ENCODE measurements at regions of chr7 and their contacts with region 1.

Region 1: GRCh38 chr7:158050978-158051651 is 536.5 kb downstream of the PTPRN2 start:
- DNase-seq: no peak
- ATAC-seq: no peak
- H3K4me3 ChIP-seq: no peak overlapping the region
- H3K27ac ChIP-seq: no peak overlapping the region
- H3K4me1 ChIP-seq: no peaks in the 10 kb centered on the region
- H3K27me3 ChIP-seq: peaks cover 9% of the 10 kb centered on the region
- CTCF ChIP-seq: no peak

Region 2: DNA sequence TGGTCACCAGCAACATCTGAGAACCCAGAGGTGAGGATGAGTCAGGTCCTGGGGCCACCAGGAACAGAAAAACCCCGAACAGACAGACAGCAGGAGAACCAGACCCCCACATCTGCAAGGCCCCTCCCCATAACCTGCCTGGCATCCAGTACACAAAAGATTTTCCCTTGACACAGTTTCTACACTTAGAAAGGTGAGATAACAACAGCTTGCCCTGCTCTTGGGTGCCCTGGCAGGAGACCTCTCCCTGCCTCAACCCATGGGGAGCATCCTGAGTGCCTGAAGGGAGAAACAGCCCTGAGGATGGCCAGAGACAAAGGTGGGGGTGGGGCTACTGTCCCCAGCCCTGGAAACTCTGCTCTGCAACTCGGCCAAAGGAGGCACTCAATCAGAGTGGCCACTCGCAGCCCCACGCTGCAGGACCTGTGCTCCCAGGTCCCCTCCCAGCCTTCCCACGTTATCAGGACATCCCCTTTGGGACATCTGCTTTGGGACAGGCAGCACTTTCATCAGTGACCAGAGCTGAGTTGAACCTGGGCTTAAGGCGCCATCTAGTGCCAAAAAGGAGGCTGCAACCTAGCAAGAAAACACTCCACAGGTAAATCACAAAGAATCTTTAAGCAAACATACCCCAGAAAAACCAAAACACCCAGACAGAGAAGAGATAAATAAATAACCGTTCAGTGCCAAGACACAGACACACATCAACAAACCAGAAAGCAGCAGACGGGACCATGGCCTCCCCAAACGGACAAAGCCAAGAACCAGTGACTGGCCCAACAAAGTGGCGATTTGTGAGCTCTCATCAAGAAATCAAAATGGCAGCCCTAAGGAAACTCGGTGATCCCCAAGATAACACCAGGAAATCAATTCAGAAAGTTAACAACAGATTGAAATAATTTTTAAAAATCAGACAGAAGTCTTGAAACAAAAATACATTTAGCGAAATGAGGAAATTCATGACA is 302.8 kb after region 1 on chr7:
- CTCF ChIA-PET with region 1: no interaction called
- POLR2A ChIA-PET with region 1: no interaction called
- intact Hi-C with region 1: loop called (anchors 10 kb)
- DNase-seq: peak; percentile 61
- ATAC-seq: peak; percentile 71
- H3K4me3 ChIP-seq: no peak overlapping the region
- H3K27ac ChIP-seq: no peak overlapping the region
- H3K4me1 ChIP-seq: no peaks in the 10 kb centered on the region
- H3K27me3 ChIP-seq: 0 out of 2 replicates have a peak, but pooled peaks cover 4% of the 10 kb centered on the region
- CTCF ChIP-seq: peak; percentile 82

Region 3: DNA sequence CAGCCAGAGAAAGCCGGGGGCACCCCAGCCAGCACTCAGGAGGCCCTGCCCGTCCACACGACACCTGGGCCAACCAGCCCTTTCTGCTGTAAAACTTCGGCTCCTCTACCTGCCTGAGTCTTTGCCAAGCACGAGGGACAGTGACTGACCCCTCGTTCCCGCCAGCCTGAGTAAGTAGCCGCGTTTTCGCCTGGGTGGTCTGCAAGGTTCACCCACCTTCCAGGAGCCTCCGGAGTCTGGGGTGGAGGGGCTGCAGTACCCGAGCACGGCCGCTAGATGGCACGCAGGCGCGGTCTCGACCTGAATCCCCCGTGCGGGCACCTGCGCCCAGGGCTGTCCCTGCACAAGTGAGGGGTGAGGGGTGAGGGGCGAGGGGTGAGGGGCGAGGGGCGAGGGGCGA is 343.8 kb after region 1 on chr7:
- CTCF ChIA-PET with region 1: no interaction called
- POLR2A ChIA-PET with region 1: no interaction called
- intact Hi-C with region 1: no loop called
- DNase-seq: peak; percentile 46
- ATAC-seq: peak; percentile 50
- H3K4me3 ChIP-seq: no peak overlapping the region
- H3K27ac ChIP-seq: no peak overlapping the region
- H3K4me1 ChIP-seq: peaks cover 15% of the 10 kb centered on the region
- H3K27me3 ChIP-seq: peaks cover 3% of the 10 kb centered on the region; the same call in 1 of the 2 replicates
- CTCF ChIP-seq: peak; percentile 62

Region 4: DNA sequence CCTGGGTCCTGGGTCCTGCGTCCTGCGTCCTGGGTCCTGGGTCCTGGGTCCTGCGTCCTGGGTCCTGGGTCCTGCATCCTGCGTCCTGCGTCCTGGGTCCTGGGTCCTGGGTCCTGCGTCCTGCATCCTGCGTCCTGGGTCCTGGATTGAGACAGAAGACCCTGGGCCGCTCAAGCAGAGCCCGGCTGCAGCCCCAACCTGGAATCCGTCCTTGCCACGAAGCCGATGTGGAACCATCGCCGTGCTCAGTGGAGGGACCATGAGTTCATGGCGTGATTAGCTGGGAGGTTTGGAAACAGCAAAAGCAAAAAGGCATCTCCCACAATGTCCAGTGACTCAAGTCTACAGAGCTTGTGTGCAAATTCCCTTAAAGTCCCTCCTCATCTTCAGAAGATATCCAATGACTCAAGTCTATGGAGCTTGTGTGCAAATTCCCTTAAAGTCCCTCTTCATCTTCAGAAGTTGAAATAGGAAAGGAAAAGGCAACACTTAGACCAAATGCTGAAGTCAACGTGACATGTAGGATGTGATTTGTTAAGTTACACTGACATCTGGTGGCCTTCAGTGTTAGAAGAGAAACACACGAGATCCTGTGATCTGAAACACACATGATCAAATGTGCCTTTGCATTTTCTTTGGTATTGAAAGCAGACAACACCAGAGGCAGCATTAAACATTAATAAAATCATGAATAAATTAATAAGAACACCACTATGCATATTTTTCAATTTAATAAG is 356.6 kb after region 1 on chr7:
- CTCF ChIA-PET with region 1: no interaction called
- POLR2A ChIA-PET with region 1: no interaction called
- intact Hi-C with region 1: loop called (anchors 2 kb)
- DNase-seq: peak; percentile 71
- ATAC-seq: peak; percentile 87
- H3K4me3 ChIP-seq: no peak overlapping the region
- H3K27ac ChIP-seq: no peak overlapping the region
- H3K4me1 ChIP-seq: no peaks in the 10 kb centered on the region
- H3K27me3 ChIP-seq: peaks cover 27% of the 10 kb centered on the region
- CTCF ChIP-seq: peak; percentile 72

Measured in PC-3 (cell line).